Heart left ventricle (tissue), 16 donors: ENCODE measurements at regions of chr10 and their contacts with region 1.

Region 1: GRCh38 chr10:5434017-5434753 is 21.8 kb downstream of the NET1 start:
- DNase-seq: no peak
- ATAC-seq: peak in 3 of 4 donors; percentile 61 to 66 (median 64)
- H3K4me3 ChIP-seq: no peak overlapping the region
- H3K27ac ChIP-seq: no peak overlapping the region
- H3K4me1 ChIP-seq: no peaks in the 10 kb centered on the region
- H3K27me3 ChIP-seq: no peaks in the 10 kb centered on the region
- CTCF ChIP-seq: peak; percentile 48 to 79 (median 68)
- POLR2A ChIP-seq: no peak

Region 2: DNA sequence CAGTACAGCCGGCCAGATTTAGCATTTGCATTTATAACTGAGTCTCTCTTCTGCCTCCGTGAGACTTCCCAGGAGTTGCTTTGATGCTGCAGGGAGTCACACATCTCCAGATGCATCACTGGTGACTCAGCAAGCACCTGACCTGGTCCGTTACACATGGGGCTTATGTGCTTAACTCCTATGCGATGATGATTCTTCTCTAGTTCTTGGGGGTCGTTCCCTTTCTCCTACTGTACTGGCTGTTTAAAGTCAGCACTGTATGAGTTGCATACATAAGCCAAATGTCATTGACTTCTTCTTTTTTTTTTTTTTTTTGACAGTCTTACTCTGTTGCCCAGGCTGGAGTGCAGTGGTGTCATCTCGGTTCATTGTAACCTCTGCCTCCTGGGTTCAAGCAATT is 621.2 kb before region 1 on chr10:
- intact Hi-C with region 1: loop called in 1 of 10 experiments (anchors 10 kb)
- DNase-seq: no peak
- ATAC-seq: no peak
- H3K4me3 ChIP-seq: no peak overlapping the region
- H3K27ac ChIP-seq: no peak overlapping the region
- H3K4me1 ChIP-seq: peaks cover 0 to 24% (median 0%) of the 10 kb centered on the region in 12 donors
- H3K27me3 ChIP-seq: no peaks in the 10 kb centered on the region
- CTCF ChIP-seq: no peak
- POLR2A ChIP-seq: no peak

Region 3: DNA sequence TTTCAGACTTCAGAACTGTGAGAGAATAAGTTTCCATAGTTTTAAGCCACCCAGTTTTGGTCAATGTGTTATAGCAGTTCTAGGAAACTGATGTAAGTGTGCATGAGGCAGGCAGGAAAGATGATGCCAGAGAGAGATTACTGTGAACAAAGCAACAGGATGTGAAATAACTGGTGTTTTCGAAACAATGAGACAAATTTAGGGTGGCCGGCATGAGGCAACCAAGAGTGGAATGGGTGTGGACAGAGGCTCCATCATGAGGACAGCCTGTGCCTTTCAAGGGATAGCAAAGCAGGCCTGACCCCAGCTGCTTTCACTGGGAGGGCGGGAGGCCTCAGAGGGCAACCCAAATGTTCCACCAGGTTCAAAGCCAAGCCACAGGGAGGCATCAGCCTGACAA is 136.7 kb before region 1 on chr10:
- intact Hi-C with region 1: no loop called
- DNase-seq: peak in 3 of 5 donors; percentile 29 to 74 (median 31)
- ATAC-seq: peak; percentile 75 to 92 (median 81)
- H3K4me3 ChIP-seq: no peak overlapping the region
- H3K27ac ChIP-seq: peak overlapping the region in 10 of 12 donors; percentile 22 to 82 (median 54)
- H3K4me1 ChIP-seq: peaks cover 0 to 50% (median 13%) of the 10 kb centered on the region in 12 donors
- H3K27me3 ChIP-seq: no peaks in the 10 kb centered on the region
- CTCF ChIP-seq: peak in 1 of 12 donors; percentile 17
- POLR2A ChIP-seq: no peak

Region 4: DNA sequence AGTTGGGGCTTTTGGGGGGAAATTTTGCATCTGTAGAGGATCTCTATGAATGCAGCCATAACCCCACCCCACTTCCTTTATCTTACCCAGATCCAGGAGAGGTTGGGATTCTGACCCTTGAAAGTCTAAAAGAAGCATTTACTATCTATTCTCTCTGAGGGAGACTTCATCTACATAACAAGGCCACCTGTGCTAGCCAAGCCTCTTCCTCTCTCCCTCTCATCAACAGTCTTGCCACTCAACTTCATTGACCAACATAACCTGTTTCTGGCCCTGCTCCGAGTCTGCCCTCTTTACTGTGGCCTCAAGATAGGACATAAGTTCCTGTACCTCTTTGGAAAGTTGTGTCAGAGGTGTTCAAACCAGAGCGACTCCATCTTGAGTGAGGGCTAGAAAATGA is 49.0 kb before region 1 on chr10:
- intact Hi-C with region 1: loop called in 1 of 10 experiments (anchors 5 kb)
- DNase-seq: no peak
- ATAC-seq: no peak
- H3K4me3 ChIP-seq: no peak overlapping the region
- H3K27ac ChIP-seq: no peak overlapping the region
- H3K4me1 ChIP-seq: no peaks in the 10 kb centered on the region
- H3K27me3 ChIP-seq: no peaks in the 10 kb centered on the region
- CTCF ChIP-seq: no peak
- POLR2A ChIP-seq: no peak

Region 5: DNA sequence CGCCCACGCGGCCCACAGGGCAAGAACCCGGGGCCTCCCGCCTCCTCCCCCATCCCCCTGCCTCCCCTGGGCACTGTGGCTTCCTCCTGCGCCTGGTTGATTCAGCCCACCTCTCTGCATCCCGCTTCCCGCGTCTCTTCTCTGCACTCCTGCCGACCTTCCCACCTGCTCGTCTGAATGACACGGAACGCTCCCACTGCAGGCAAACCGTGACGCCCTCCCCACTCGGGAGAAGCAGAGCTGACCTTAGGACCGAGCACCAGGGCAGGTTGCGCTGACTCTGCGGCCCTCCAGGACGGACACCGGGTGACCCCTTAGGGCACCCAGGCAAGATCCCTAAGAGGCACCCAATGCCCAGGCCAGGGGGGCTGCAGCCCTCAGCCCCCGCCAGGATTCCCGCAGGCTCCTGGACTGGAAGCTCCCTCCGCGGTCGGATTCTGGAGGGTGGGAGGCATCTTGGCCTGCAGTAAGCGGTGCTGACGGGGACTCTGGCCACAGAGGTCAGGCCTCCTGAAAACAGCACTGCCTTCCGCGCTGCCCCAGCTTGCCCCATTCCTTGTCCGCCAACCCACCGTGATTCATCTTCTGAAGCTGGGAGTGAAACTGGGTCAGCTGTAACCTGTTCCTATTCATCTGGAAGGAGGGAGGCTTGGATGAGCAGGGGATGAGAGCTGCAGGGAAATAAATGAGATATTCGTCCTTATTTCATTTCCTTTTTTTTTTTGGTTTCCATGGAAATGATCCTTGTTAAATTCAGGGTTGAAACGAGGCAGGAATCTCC is 91.6 kb after region 1 on chr10:
- intact Hi-C with region 1: no loop called
- DNase-seq: peak in 1 of 5 donors; percentile 47
- ATAC-seq: no peak
- H3K4me3 ChIP-seq: no peak overlapping the region
- H3K27ac ChIP-seq: no peak overlapping the region
- H3K4me1 ChIP-seq: peaks cover 0 to 11% (median 0%) of the 10 kb centered on the region in 12 donors
- H3K27me3 ChIP-seq: no peaks in the 10 kb centered on the region
- CTCF ChIP-seq: no peak
- POLR2A ChIP-seq: no peak